AG04450 (cell line): ENCODE measurements at regions of chr1 and their contacts with region 1.

Region 1: DNA sequence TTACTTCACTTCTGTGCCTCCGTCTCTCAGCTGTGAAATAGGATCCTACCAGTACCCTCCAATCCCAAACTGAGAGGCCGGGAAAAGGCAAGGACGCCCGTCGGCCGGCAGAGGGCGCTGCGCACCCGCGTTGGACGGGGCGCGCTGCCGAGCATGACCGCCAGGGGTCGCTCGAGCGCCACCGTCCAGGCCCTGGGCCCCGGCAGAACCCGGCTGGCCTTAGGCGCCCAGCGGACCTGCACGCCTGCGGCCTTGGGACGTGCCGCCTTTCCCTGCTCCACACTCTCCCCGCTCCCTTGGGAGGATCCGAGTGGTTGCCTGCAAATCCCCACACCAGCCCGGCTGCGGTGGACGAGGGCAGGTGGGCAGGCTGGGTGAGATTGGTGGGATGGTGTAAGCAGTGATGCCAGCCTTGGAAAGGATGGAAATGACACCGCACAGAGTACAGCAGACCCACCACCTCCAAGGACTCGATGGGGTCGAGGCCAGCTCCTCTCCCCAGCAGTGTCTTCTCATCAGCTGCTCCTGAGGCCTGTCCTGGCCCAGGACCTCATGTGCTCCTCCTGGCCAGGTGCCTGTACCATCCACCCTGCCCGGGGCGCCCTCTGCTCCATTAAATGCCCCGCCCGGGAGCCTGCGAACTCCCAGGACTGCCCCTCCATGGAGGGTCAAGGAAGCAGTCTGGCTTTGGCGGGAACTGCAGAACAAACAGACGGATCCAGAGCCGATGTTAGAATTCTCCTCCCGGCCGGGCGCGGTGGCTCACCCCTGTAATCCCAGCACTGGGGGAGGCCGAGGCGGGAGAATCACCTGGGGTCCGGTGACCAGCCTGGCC is 47.4 kb upstream of the LBR start:
- DNase-seq: peak; percentile 33
- H3K4me3 ChIP-seq: peak overlapping the region; percentile 27; the same call in 1 of the 2 replicates
- H3K27ac ChIP-seq: no peak overlapping the region
- H3K27me3 ChIP-seq: no peaks in the 10 kb centered on the region
- CTCF ChIP-seq: peak; percentile 100

Region 2: DNA sequence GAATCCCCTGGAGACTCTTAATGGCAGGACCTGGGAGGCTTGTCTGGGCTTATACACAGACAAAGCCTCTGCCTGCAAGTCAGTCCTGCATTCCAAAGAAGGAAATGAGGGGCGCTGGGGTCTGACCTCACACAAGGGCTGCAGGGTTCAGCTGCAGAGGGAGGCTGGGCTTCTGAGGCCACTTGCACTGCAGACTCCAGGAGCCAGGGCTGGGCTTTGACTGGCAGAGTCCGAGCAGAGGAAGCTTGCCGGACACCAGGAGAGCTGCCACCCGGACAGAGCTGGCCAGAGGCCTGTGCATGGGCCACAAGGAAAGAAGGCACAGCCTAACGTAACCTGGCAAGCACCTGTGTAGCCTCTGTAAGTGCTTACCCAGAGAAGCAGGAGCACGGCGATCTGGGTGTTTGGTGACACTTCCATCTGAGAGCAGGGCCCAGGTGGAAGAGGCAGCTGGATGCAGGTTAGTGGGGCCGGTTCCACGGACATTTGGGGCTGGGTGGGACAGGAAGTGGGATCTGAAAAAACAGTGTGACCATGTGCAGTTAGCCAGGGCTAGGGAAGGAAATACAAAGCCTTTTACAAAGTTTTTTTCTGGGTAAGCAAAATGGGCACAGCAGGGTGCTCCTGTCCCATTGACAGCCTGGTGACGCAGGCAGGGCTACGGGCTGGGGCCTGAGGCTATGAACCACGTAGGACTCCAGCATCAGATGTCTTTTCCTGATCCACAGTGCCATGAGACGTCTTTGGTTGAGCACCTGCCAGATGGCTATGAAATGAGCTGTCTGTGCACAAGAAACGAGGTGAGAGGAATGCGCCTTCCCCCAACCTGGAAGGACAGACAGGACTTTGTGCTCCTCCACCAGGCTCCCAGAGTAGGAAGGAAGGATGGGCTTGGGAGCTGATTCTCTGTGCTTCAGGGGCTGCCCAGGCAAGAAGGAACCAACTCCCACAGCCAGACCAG is 10.1 kb before region 1 on chr1:
- CTCF ChIA-PET with region 1: interaction called, 12 read pairs
- POLR2A ChIA-PET with region 1: no interaction called
- DNase-seq: no peak
- H3K4me3 ChIP-seq: no peak overlapping the region
- H3K27ac ChIP-seq: no peak overlapping the region
- H3K27me3 ChIP-seq: no peaks in the 10 kb centered on the region
- CTCF ChIP-seq: no peak

Region 3: DNA sequence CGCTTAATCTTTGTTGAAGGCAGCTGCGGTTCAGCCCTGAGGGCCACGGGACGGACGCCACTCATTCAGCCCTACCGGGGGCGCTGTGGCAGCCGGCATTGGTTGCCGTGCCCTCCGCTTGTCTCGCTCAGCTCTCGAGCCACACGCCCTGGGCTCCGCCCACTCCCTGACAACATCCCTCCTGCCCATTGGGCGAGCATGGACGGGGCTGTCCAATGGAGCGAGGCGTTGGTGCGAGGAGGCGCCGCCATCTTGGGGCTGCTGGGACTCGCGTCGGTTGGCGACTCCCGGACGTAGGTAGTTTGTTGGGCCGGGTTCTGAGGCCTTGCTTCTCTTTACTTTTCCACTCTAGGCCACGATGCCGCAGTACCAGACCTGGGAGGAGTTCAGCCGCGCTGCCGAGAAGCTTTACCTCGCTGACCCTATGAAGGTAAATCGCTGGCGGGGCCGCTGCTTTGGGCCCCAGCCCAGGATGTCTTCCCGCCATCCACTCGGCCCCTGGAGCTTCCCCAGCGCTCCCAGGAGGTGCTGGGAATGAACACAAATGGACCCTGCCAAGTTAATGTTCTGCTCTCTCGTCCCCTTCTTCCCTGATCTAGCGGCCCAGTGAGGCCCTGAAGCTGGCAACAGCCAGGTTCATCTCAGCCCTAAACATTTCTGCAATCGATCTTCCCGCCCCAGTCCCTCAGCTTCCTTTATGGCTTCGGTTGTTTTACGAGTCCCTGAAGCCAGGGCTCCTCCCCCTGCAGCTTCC is 302.6 kb after region 1 on chr1 and contains the start of gene SRP9:
- CTCF ChIA-PET with region 1: interaction called, 102 read pairs
- POLR2A ChIA-PET with region 1: interaction called, 12 read pairs
- DNase-seq: peak; percentile 94
- H3K4me3 ChIP-seq: peak within 1 kb of the TSS; percentile 84
- H3K27ac ChIP-seq: peak within 1 kb of the TSS; percentile 93
- H3K27me3 ChIP-seq: no peaks in the 10 kb centered on the region
- CTCF ChIP-seq: peak; percentile 86
- polyA plus RNA-seq, gene SRP9: 361 and 527 TPM in 2 replicates

Region 4: GRCh38 chr1:225845571-225846259 is 370.5 kb after region 1 on chr1:
- CTCF ChIA-PET with region 1: interaction called, 21 read pairs
- POLR2A ChIA-PET with region 1: no interaction called
- DNase-seq: peak; percentile 45
- H3K4me3 ChIP-seq: no peak overlapping the region
- H3K27ac ChIP-seq: no peak overlapping the region
- H3K27me3 ChIP-seq: no peaks in the 10 kb centered on the region
- CTCF ChIP-seq: peak; percentile 83

Region 5: GRCh38 chr1:225911191-225912130 is 436.3 kb after region 1 on chr1:
- CTCF ChIA-PET with region 1: interaction called, 27 read pairs
- POLR2A ChIA-PET with region 1: no interaction called
- DNase-seq: no peak
- H3K4me3 ChIP-seq: 0 out of 2 replicates have a peak overlapping the region, but pooled peaks have one; percentile 10
- H3K27ac ChIP-seq: no peak overlapping the region
- H3K27me3 ChIP-seq: no peaks in the 10 kb centered on the region
- CTCF ChIP-seq: peak; percentile 76

Region 6: DNA sequence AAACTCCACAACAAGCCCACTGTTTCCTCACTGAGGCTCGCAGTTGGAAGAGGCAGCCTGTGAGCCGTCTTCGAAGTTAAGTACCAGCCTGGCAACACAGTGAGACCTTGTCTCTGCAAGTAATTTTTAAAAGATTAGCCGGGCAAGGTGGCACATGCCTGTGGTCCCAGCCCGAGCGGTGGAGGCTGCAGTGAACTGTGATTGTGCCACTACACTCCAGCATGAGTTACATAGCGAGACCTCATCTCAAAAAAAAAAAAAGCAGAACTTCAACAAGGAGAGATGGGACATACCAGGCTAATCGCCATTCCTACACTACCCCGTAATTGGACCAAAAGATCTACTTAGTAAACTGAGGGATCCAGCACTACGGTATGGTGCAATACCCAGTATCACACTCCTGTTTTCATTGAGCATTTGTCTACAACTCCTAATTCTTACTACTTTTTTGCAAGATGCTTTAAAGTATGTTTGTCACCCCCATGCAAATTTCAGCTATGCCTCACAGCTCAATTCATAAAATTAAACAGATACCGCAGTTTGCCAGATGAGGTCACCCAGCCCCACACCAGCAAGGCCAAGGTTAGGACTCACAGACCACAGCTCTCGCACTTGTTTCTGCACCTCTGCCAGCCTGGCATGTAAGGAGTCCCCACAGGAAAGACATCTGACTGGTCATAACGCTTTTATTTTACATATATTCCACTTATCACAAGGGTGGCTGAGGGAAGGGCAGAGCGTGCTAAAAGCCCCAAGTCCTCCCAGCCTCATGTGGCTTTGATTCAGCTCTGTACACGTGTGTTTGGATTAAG is 502.9 kb after region 1 on chr1:
- CTCF ChIA-PET with region 1: interaction called, 31 read pairs
- POLR2A ChIA-PET with region 1: no interaction called
- DNase-seq: no peak
- H3K4me3 ChIP-seq: no peak overlapping the region
- H3K27ac ChIP-seq: no peak overlapping the region
- H3K27me3 ChIP-seq: no peaks in the 10 kb centered on the region
- CTCF ChIP-seq: no peak